Ovary (tissue), 10 donors: ENCODE measurements at regions of chr17 and their contacts with region 1.

Region 1: GRCh38 chr17:75430159-75430974 is 24.9 kb upstream of the GRB2 start:
- DNase-seq: no peak
- H3K4me3 ChIP-seq: no peak overlapping the region
- H3K27ac ChIP-seq: peak overlapping the region in 1 of 2 donors; percentile 11
- H3K4me1 ChIP-seq: no peaks in the 10 kb centered on the region
- H3K27me3 ChIP-seq: no peaks in the 10 kb centered on the region
- CTCF ChIP-seq: no peak
- EP300 ChIP-seq: no peak
- POLR2A ChIP-seq: no peak

Region 2: DNA sequence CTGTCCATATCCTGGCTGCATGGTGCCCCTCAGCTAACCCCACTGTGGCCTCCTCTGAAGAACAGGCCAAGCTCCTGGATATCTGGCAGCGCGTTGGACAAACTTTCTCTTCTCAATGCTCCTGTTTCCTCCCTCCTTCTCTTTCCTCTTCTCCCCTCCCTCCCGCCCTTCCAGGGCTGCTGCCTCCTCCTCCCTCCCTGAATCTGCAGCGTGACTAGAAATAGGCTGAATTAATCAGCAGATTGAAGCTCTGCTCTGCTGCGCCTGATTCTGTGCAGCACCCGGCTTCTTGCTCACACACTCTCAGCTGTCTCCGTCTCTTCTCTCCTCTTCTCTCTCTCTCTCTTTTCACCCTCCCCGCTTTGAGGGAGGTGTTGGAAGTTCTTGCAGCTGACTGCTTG is 45.9 kb after region 1 on chr17:
- intact Hi-C with region 1: no loop called
- DNase-seq: peak; percentile 53 to 62 (median 60)
- H3K4me3 ChIP-seq: no peak overlapping the region
- H3K27ac ChIP-seq: peak overlapping the region in 1 of 2 donors; percentile 49
- H3K4me1 ChIP-seq: peaks cover 20% of the 10 kb centered on the region
- H3K27me3 ChIP-seq: no peaks in the 10 kb centered on the region
- CTCF ChIP-seq: no peak
- EP300 ChIP-seq: no peak
- POLR2A ChIP-seq: no peak

Region 3: DNA sequence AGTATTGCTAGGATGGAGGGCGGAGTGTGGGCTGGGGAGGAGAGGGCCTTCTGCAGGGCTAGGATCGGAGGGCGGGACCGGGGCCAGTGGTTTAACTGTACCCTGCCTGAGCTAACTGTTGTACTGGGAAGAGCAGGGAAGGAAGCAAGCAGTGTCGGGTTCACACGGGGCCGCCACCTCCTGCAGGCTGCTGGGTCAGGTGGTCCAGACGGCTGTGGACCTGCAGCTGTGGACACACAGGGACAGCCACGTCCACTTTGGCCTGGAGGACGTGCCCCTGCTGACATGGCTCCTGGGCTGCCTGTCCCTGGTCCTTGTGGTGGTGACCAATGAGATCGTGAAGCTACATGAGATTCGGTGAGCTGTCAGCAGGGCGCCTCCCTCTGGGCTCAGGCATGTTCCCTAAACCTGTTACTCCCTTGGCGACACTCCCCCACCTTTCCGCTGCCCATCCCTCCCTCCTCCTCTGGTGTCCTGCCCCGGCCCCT is 68.4 kb after region 1 on chr17:
- intact Hi-C with region 1: loop called in 1 of 4 experiments (anchors 10 kb)
- DNase-seq: peak in 3 of 5 donors; percentile 52 to 56 (median 54)
- H3K4me3 ChIP-seq: no peak overlapping the region
- H3K27ac ChIP-seq: peak overlapping the region in 1 of 2 donors; percentile 66
- H3K4me1 ChIP-seq: peaks cover 3% of the 10 kb centered on the region
- H3K27me3 ChIP-seq: no peaks in the 10 kb centered on the region
- CTCF ChIP-seq: no peak
- EP300 ChIP-seq: no peak
- POLR2A ChIP-seq: no peak

Region 4: GRCh38 chr17:75515496-75516254 is 85.3 kb after region 1 on chr17 and contains the start of gene CASKIN2:
- intact Hi-C with region 1: loop called in 2 of 4 experiments (anchors 5 kb)
- DNase-seq: peak; percentile 98 to 99 (median 99)
- H3K4me3 ChIP-seq: peak within 1 kb of the TSS; percentile 94
- H3K27ac ChIP-seq: peak within 1 kb of the TSS; percentile 69 to 79
- H3K4me1 ChIP-seq: peaks cover 23% of the 10 kb centered on the region
- H3K27me3 ChIP-seq: no peaks in the 10 kb centered on the region
- CTCF ChIP-seq: peak; percentile 93 to 99 (median 98)
- EP300 ChIP-seq: no peak
- POLR2A ChIP-seq: peak; percentile 12
- total RNA-seq, gene CASKIN2: 9.1 to 58.7 (median 41.3) TPM

Region 5: GRCh38 chr17:75589012-75589918 is 158.9 kb after region 1 on chr17:
- intact Hi-C with region 1: loop called in 3 of 4 experiments (anchors 2 to 10 kb)
- DNase-seq: peak; percentile 94 to 99 (median 98)
- H3K4me3 ChIP-seq: peak overlapping the region; percentile 74
- H3K27ac ChIP-seq: peak overlapping the region; percentile 93 to 98
- H3K4me1 ChIP-seq: peaks cover 6% of the 10 kb centered on the region
- H3K27me3 ChIP-seq: no peaks in the 10 kb centered on the region
- CTCF ChIP-seq: peak in 2 of 3 donors; percentile 87 to 97
- EP300 ChIP-seq: no peak
- POLR2A ChIP-seq: peak; percentile 90

Region 6: GRCh38 chr17:75738218-75738802 is 307.9 kb after region 1 on chr17:
- intact Hi-C with region 1: loop called in 3 of 4 experiments (anchors 10 kb)
- DNase-seq: no peak
- H3K4me3 ChIP-seq: no peak overlapping the region
- H3K27ac ChIP-seq: no peak overlapping the region
- H3K4me1 ChIP-seq: no peaks in the 10 kb centered on the region
- H3K27me3 ChIP-seq: no peaks in the 10 kb centered on the region
- CTCF ChIP-seq: no peak
- EP300 ChIP-seq: no peak
- POLR2A ChIP-seq: no peak

Region 7: GRCh38 chr17:75749545-75750389 is 319.4 kb after region 1 on chr17:
- intact Hi-C with region 1: loop called in 2 of 4 experiments (anchors 10 kb)
- DNase-seq: peak; percentile 84 to 93 (median 91)
- H3K4me3 ChIP-seq: no peak overlapping the region
- H3K27ac ChIP-seq: no peak overlapping the region
- H3K4me1 ChIP-seq: peaks cover 4% of the 10 kb centered on the region
- H3K27me3 ChIP-seq: no peaks in the 10 kb centered on the region
- CTCF ChIP-seq: peak; percentile 91 to 94 (median 92)
- EP300 ChIP-seq: no peak
- POLR2A ChIP-seq: no peak